ENCODE measurements at regions of chr22 and their contacts with region 1.

Region 1: DNA sequence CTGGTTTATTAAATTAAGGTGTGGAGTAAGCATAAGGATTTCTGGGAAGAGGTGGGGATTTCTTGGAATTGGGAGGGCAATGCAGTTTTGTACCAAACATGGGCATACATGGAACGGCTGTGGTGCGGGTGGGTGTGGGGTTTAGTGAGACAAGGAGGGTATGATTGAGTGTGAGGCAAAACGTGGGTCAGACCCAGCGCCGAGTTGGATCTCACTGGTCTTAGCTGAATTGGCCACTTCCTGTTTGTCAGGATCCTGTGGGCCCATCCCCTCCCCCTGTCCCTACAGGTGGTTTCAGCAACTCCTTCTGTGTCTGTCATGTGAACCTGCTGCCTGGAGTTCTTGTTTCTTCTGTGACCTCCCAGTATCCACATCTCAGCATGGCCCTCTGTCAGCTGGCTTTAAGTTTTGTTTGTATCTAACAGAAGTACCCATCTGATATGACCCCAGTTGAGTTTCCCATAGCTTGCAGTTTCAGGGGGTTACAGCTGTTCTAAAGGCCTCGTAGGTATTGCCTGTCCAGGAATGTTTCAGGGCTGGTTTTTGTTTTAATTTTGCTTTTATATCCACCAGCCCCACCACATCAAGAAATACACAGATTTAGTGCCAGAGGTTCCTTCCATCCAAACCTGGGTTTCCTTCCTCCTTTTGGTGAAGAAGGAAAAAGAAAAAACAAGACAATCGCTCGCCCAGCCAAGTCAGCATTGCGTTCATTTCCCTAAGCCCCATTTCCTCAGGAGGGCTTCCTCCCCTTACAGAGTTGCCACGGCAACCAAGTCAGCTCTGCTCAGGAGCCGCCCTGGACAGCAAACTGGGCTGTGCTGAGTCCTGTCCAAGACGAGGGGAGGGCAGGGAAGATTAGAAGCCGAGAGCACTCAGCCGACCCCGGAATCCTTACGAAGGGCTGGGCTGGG is 6.0 kb downstream of the APOL1 start:
- DNase-seq: no peak

Region 2: DNA sequence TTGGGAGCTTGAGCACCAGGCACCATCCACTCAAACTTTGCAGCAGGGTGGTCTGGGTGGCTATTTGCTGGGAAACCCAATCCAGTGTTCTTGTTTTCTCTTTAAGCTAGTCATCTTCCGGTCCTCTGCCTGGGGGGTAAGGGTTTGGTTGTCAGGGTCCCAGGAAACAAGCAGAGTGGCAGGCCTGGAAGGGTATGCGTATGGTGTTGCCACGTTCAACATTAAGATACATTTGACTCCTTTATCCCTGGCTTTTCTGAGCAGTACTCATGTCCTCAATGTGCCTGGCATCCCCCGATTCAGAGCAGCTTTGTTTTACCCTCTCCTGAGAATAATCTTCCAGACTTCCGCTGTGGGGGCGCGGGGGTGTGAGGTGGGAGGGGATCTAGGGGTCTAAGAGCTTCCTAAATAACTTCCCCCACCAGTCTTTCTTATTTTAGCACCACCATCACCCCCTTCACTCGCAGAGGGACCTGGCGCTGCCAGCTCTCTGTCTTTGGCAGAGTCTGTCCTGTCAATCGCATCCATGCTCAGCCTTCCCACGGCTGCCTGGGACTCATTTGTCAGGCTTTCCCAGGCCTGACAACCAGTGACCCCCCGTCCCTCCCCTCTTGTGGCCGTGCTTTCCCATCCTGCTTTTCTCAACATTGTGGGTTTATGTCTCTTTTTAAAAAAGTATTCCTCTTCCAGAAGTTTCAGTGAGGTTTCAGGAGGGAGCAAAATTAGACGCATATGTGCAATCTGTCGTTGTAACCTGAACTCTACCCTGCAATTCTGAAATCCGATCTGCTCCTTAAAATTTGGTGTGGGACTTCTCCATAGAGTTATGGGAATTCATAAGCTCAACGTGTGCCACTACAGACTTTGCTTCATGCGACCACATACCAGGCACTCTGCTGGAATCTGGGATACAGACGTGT is 203.3 kb before region 1 on chr22:
- intact Hi-C with region 1: no loop called
- DNase-seq: no peak

Region 3: DNA sequence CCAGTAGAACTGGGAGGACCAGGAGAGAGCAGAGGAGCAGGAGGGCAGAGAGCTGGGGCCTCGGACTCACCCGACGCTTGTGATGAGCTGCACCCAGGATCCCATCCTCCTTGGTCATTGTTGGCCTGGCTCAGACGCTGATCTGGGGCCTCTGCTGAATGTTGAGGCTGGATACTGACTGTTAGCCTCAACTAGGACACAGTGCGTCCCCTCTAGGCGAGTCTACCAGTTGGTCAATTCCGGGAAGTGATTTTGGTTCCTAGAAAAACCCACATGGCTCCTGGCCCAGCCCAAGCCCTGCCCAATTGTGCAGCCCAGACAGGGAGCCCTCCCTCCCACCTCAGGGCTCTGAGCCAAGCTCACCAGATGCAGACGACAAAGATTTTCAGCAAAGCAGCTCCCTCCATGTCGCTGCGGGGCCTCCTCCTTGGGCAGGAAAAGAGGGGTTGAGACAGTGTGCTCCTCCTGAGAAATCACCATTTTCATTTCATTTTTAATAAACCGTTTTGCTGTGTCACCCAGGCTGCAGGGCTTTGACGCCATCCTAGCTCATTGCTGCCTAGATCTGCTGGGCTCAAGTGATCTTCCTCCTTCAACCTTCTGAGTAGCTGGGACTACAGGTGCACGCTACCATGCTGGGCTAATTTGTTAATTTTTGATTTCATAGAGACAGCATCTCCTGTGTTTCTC is 57.2 kb before region 1 on chr22 and contains the start of gene APOL4:
- intact Hi-C with region 1: loop called (anchors 5 kb)
- DNase-seq: peak; percentile 91
- total RNA-seq, gene APOL4: 6.1 TPM